ENCODE measurements at regions of chr12 and their contacts with region 1.

Region 1: DNA sequence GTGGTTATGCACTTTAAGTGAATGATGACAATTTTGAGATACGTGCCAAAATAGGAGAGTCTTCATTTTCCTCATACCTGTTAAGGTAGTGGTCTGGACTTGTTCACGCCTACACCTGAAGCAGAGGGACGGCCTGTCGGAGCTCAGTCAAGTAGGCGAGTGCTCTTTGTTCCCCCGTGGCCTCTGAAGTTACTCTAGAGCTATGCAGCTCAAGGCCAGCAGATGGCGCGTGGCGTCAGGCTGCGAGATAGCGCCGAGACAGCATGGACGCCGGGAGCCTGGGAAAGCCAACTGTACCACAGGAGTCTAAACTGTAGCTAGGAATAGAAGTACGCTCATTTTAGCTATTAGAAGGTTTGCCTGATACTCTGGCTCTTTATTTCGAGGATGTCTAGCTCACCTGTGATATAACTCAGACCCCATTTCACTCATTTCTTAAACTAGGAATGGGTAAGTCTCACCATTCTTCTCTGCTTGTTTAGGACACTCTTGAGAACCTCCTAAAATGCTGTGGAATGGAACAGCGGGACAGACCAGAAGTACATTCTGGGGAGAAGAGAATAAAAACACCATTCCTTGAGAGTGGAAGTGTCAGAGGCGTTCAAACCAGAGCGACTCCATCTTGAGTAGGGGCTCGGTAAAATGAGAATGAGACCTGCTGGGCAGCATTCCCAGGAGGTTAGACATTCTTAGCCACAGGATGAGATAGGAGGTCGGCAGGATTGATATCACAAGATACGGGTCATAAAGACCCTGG is 267.4 kb upstream of the HMGA2 start:
- DNase-seq: peak in 4 of 5 donors; percentile 18 to 34 (median 28)
- H3K4me3 ChIP-seq: no peak overlapping the region
- H3K4me3 Mint-ChIP-seq: peak overlapping the region in 1 of 8 donors; percentile 38
- H3K27ac ChIP-seq: no peak overlapping the region
- H3K27ac Mint-ChIP-seq: no peak overlapping the region
- H3K4me1 ChIP-seq: peaks cover 3% of the 10 kb centered on the region
- H3K4me1 Mint-ChIP-seq: peaks cover 0 to 8% (median 3%) of the 10 kb centered on the region in 4 donors
- H3K27me3 ChIP-seq: no peaks in the 10 kb centered on the region
- H3K27me3 Mint-ChIP-seq: peaks cover 4% of the 10 kb centered on the region in 2 donors

Region 2: GRCh38 chr12:65490250-65490649 is 66.6 kb before region 1 on chr12:
- CTCF ChIA-PET with region 1: no interaction called
- POLR2A ChIA-PET with region 1: no interaction called
- intact Hi-C with region 1: no loop called
- DNase-seq: no peak
- H3K4me3 ChIP-seq: no peak overlapping the region
- H3K4me3 Mint-ChIP-seq: no peak overlapping the region
- H3K27ac ChIP-seq: no peak overlapping the region
- H3K27ac Mint-ChIP-seq: no peak overlapping the region
- H3K4me1 ChIP-seq: no peaks in the 10 kb centered on the region
- H3K4me1 Mint-ChIP-seq: peaks cover 0 to 1% (median 0%) of the 10 kb centered on the region in 4 donors
- H3K27me3 ChIP-seq: no peaks in the 10 kb centered on the region
- H3K27me3 Mint-ChIP-seq: peaks cover 0 to 3% of the 10 kb centered on the region in 2 donors

Region 3: DNA sequence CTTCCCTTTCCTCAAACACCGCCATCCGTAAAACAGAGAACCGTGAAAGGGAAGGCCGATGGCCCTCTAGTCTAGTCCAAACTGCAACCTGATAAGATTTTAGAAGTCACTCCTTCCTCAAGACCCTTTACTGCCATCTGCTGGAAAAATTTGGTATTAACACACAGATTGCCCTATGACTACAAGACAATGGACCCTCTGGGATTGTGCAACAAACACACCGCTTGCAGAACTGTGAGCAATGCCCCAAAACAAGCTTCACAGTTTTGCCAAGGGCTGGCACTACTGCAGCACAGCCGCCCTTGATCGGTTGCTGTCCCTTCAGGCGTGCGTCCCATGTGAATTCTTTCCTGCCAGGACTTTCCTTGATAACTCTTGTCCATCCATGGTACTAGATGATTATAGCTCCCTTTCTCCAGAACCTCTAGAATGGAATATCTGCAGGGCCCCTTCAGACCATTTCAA is 550.6 kb after region 1 on chr12:
- CTCF ChIA-PET with region 1: no interaction called
- POLR2A ChIA-PET with region 1: no interaction called
- intact Hi-C with region 1: loop called (anchors 5 kb)
- DNase-seq: peak; percentile 66 to 73 (median 69)
- H3K4me3 ChIP-seq: no peak overlapping the region
- H3K4me3 Mint-ChIP-seq: no peak overlapping the region
- H3K27ac ChIP-seq: no peak overlapping the region
- H3K27ac Mint-ChIP-seq: no peak overlapping the region
- H3K4me1 ChIP-seq: peaks cover 3% of the 10 kb centered on the region
- H3K4me1 Mint-ChIP-seq: peaks cover 2 to 6% (median 4%) of the 10 kb centered on the region in 4 donors
- H3K27me3 ChIP-seq: no peaks in the 10 kb centered on the region
- H3K27me3 Mint-ChIP-seq: peaks cover 13 to 19% of the 10 kb centered on the region in 2 donors